Dorsolateral prefrontal cortex (tissue), 120 donors: ENCODE measurements at regions of chr6 and their contacts with region 1.

Region 1: GRCh38 chr6:157379656-157380454 is 1.1 kb upstream of the ZDHHC14 start:
- DNase-seq: peak; percentile 80 to 96 (median 94)
- H3K4me3 ChIP-seq: peak overlapping the region; percentile 63 to 100 (median 95)
- H3K27ac ChIP-seq: peak overlapping the region; percentile 80 to 99 (median 97)
- H3K27me3 ChIP-seq: no peaks in the 10 kb centered on the region
- CTCF ChIP-seq: peak in 21 of 56 donors; percentile 6 to 33 (median 14)

Region 2: DNA sequence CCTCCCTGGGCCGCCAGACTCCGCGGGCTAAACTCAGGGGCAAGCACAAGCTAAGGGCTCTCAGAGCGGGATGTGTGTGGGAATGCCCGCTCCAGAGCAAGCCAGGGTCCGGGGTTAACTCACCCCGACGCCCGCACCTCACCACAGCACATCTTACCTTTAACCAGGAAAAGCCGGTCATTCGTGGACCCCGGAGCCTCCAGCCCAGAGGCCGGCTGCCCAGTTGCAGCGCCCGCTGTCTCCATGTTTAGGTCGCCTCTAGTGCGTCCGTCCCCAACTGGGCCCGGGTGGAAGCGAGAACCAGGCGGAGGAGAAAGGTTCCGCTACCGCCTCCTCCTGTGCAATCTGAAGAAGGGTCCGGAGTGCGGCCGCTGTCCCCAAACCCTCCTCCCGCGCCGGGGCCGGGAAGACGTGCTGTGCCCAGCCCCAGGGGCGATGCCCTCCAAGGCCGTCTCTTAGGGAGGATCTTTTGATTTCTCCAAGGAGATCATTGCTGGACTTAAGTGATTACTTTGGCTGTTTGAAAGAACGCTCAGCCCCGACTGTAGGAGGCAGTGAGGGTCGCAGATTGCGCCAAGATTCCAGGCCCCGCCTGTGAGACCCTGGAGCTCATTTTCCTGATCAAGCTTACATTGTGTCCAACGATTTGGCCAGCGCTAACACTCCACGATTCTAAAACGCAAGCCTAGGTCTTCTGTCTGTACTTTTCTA is 56.4 kb before region 1 on chr6 and contains the start of gene TMEM242:
- intact Hi-C with region 1: loop called (anchors 1 to 2 kb)
- DNase-seq: peak; percentile 83 to 94 (median 90)
- H3K4me3 ChIP-seq: peak within 1 kb of the TSS; percentile 61 to 99 (median 90)
- H3K27ac ChIP-seq: peak within 1 kb of the TSS; percentile 73 to 99 (median 93)
- H3K27me3 ChIP-seq: no peaks in the 10 kb centered on the region
- CTCF ChIP-seq: peak in 50 of 56 donors; percentile 1 to 67 (median 48)
- total RNA-seq, gene TMEM242: 10.7 to 28.5 (median 20.7) TPM

Region 3: GRCh38 chr6:157434349-157435033 is 54.6 kb after region 1 on chr6:
- intact Hi-C with region 1: loop called in 1 of 2 experiments (anchors 5 kb)
- DNase-seq: peak in 2 of 10 donors; percentile 48 to 55
- H3K4me3 ChIP-seq: peak overlapping the region in 19 of 59 donors; percentile 0 to 41 (median 16)
- H3K27ac ChIP-seq: peak overlapping the region in 53 of 59 donors; percentile 1 to 85 (median 60)
- H3K27me3 ChIP-seq: no peaks in the 10 kb centered on the region
- CTCF ChIP-seq: no peak

Region 4: GRCh38 chr6:157456524-157457082 is 76.7 kb after region 1 on chr6:
- intact Hi-C with region 1: loop called in 1 of 2 experiments (anchors 2 kb)
- DNase-seq: no peak
- H3K4me3 ChIP-seq: peak overlapping the region in 5 of 59 donors; percentile 21 to 34 (median 31)
- H3K27ac ChIP-seq: peak overlapping the region in 58 of 59 donors; percentile 33 to 98 (median 92)
- H3K27me3 ChIP-seq: no peaks in the 10 kb centered on the region
- CTCF ChIP-seq: no peak

Region 5: DNA sequence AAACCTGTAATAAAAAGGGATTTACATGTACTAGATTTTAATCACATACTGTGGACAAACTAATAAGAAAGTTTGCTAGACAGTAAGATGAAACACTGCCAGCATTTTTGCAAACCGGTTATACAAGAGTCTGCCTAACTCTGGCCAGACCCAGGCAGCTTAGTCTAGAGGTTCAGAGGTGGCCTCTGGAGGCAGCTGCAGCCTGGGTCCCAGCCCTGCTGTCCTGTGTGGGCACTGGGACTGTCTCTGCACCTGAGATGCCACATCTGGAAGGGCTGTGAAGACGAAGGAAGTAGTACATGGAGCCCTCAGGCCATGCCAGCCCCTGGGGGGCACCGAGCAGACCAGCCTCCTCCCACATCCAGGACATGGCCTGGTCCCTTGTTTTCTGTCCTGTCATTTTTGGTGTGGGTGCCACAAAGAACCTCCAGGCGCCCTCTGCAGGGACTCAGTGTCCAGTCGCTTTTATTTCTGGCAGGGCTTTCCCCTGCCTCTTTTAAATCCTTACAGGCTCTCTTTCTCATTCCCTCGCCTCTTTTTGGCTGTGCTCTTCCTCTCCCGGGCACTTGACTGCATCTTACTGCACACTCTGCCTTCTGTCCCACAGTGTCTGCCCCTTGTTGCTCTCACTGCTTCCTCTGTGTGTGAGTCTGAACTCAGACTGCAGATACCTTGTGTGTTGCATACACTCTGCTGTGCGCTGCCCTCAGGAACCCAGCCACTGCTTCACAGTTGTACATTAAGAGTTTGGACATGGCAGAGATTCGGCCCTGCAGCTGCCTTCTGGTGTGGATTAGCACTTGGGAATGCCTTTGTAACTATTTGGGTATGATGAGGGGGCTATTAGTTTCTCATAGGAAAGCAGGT is 217.8 kb after region 1 on chr6:
- intact Hi-C with region 1: loop called in 1 of 2 experiments (anchors 10 kb)
- DNase-seq: peak in 4 of 10 donors; percentile 15 to 49 (median 34)
- H3K4me3 ChIP-seq: no peak overlapping the region
- H3K27ac ChIP-seq: peak overlapping the region in 13 of 59 donors; percentile 1 to 77 (median 20)
- H3K27me3 ChIP-seq: no peaks in the 10 kb centered on the region
- CTCF ChIP-seq: peak in 54 of 56 donors; percentile 22 to 72 (median 51)